ENCODE measurements at regions of chr11 and their contacts with region 1.

Region 1: DNA sequence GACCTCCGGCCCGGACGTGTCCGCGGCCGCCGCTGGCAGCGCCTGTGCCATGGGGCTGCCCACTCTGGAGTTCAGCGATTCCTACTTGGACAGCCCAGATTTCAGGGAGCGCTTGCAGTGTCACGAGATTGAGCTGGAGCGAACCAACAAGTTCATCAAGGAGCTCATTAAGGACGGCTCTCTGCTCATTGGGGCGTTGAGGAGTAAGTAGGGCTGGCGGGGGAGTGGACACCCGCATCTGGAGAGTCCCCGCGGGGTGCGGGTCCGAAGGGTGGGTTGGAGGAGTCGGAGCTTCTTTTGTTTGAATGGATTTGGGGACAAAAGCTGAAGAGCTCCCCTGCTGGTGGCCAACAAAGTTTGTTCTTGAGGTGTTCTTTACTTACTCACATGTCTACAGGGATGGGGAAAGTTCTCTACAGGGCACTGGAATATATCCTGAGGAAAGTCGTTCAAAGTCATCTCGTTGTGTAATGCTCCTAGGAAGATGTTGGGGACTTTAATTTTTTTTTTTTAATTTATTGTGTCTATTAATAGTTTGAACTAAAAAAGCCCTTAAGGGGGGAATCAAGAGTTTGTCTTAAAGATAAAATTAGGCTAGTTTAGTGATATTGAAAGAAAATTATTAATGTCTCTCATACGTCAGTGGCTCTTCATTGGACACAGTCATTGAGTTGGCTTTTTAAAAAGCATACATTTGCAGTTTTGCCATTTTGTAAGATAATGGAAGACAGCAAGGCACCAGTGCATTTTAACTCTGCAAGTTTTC is 725 bp downstream of the ARHGAP42 start:
- DNase-seq: peak; percentile 46 to 66 (median 65)
- ATAC-seq: peak; percentile 70 to 75 (median 72)
- H3K4me3 ChIP-seq: peak overlapping the region; percentile 61 to 71 (median 70)
- H3K27ac ChIP-seq: peak overlapping the region; percentile 76 to 87 (median 83)
- H3K4me1 ChIP-seq: peaks cover 0 to 29% (median 6%) of the 10 kb centered on the region in 4 donors
- H3K27me3 ChIP-seq: no peaks in the 10 kb centered on the region
- CTCF ChIP-seq: peak; percentile 50 to 59 (median 56)
- POLR2A ChIP-seq: peak; percentile 27

Region 2: GRCh38 chr11:100727410-100727809 is 39.6 kb after region 1 on chr11:
- intact Hi-C with region 1: no loop called
- DNase-seq: no peak
- ATAC-seq: peak; percentile 62 to 84 (median 76)
- H3K4me3 ChIP-seq: no peak overlapping the region
- H3K27ac ChIP-seq: peak overlapping the region in 1 of 3 donors; percentile 10
- H3K4me1 ChIP-seq: no peaks in the 10 kb centered on the region
- H3K27me3 ChIP-seq: no peaks in the 10 kb centered on the region
- CTCF ChIP-seq: no peak
- POLR2A ChIP-seq: no peak

Region 3: DNA sequence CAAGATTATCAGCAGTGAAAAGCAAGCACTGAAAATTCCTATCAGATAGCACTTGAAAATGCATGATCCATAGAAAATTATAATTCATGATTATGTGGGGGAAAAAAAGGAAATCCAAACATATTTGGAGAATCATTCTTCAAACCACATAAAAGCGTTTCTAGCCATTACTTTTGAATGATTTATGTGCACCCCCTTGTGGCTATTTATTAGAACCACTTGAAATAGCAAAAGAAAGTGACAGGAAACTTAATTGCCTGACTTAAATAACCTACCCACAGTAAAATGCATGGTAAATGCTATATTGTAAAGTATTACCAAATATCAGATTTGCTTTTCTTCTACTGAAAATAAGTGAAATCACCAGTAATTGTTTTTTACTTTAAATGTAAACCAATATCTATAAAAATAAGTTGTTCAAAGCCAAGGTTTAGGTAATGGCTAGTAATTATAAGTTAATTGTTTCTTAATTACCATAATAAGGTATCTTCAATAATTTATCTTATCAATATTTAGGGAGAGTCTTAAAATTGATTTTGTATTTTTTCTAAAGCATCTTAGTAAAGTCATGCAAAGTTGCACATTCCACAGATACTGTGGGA is 167.8 kb after region 1 on chr11:
- intact Hi-C with region 1: loop called in 1 of 2 experiments (anchors 10 kb)
- DNase-seq: no peak
- ATAC-seq: peak; percentile 52 to 67 (median 60)
- H3K4me3 ChIP-seq: no peak overlapping the region
- H3K27ac ChIP-seq: no peak overlapping the region
- H3K4me1 ChIP-seq: peaks cover 0 to 19% (median 9%) of the 10 kb centered on the region in 4 donors
- H3K27me3 ChIP-seq: no peaks in the 10 kb centered on the region
- CTCF ChIP-seq: peak; percentile 64 to 77 (median 72)
- POLR2A ChIP-seq: no peak